Right ventricle myocardium inferior (tissue), 1 donor: ENCODE measurements at regions of chr22 and their contacts with region 1.

Region 1: DNA sequence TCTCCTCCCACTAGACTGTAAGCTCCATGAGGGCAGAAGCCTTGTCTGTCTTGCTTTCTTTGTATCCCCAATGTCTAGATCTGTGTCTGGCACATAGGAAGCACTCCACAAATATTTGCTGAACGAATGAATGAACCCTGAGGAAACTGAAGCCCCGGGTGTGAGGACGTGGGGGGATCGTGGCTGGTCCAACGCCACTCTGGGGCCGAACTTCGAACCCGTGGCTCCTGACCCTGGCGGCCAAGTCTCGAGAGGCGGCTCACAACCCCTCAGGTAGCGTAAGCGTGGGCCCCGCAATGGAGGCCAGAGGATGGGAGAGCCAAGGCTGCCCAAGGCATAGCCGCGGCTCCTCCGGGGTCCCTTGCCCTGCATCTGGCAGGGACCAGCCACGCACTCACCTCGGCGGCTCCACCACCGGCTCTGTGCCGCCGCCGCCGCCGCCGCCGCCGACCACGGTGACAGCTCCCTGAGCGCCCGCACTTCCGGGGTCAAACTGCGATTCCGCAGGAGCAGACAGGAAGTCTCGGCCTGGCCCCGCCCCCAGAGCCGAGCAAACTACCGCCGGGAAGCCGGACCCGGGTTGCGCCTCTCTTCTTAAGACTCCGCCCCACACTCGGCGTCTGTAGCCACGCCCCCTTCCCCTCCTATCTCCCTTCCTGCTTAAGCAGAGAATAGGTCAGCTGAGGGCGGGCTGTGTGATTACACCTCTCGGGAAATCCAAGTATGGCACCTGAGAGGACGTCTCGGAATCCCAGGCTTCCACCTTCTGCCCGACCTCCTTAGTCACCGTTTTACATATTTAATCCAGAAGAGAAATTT is at the start of gene ASCC2:
- DNase-seq: peak; percentile 100
- ATAC-seq: peak; percentile 100
- total RNA-seq, gene ASCC2: 33.8 TPM

Region 2: GRCh38 chr22:29994943-29995342 is 157.0 kb after region 1 on chr22:
- intact Hi-C with region 1: loop called (anchors 5 kb)
- DNase-seq: no peak
- ATAC-seq: peak; percentile 44